H1 (cell line): ENCODE measurements at regions of chr19 and their contacts with region 1.

Region 1: DNA sequence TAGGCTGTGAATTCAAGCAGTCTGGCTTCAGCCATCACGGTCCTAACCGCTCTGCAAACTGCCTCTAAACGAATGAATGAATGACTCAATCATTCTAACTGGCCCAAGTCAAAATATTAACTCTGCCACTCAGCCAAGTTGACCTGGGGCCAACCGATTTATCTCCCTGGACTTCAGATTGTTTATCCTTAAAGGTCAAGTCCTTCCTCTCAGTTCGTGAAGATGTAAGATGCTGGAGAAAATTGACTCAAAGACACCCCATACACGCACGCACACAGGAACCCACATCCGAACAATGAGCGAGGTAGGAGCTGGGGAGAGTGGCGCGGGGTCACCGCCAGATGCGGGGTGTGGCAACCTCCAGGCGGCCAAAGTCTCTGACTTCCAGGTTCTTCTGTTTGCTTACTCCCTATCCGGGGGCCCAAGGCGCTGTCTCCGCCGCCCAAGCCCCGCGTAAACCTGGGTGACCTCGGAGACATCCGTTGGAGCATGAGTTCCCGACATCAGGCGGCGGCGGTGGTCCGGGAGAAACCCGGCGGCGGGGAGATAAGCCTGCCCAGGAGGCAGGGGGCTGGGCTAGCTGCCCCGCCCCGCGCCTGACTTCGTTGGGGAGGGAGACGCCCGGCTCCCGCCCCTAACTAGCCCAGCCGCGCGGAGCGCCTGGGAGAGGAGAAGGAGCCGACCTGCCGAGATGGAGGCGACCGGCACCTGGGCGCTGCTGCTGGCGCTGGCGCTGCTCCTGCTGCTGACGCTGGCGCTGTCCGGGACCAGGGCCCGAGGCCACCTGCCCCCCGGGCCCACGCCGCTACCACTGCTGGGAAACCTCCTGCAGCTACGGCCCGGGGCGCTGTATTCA is at the start of gene CYP2S1:
- DNase-seq: peak in 1 of 2 experiments; percentile 85
- H3K4me3 ChIP-seq: peak within 1 kb of the TSS; percentile 72 to 93 (median 80)
- H3K27ac ChIP-seq: peak within 1 kb of the TSS; percentile 65; the same call in 1 of the 2 replicates
- H3K4me1 ChIP-seq: peaks cover 13 to 26% (median 20%) of the 10 kb centered on the region in 4 experiments
- H3K27me3 ChIP-seq: no peaks in the 10 kb centered on the region
- CTCF ChIP-seq: no peak
- EP300 ChIP-seq: peak in 1 of 2 experiments; percentile 20; a peak in 1 of 3 replicates
- POLR2A ChIP-seq: peak in 1 of 2 experiments; percentile 49; a peak in 1 of 3 replicates
- RAD21 ChIP-seq: no peak
- total RNA-seq, gene CYP2S1: 245 and 267 TPM in 2 replicates

Region 2: DNA sequence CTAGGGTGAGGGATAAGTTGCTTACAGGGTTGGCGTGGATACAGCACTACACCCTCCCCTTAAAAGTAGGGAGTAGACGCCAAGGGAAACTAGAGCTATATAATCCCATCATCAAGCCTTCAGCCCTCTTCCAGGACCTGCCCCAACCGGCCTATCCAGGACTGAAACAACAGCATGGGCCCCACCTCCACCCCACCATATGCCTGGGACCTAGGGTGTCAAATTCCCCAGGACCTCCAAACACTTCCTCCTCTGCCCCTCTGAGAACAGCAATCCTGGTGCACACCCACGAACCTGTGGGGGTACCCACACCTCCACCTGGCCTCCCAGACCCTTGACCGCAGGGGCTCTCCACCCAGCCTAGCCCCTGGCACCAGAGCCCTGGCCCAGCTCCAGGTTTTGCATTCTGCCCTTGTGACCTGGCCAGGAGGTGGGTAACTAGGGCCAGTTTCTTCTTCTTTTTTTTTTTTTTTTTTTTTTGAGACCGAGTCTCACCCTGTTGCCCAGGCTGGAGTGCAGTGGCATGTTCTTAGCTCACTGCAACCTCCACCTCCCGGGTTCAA is 80.0 kb before region 1 on chr19:
- CTCF ChIA-PET with region 1: no interaction called
- POLR2A ChIA-PET with region 1: no interaction called
- DNase-seq: no peak
- H3K4me3 ChIP-seq: no peak overlapping the region
- H3K27ac ChIP-seq: no peak overlapping the region
- H3K4me1 ChIP-seq: no peaks in the 10 kb centered on the region
- H3K27me3 ChIP-seq: no peaks in the 10 kb centered on the region
- CTCF ChIP-seq: no peak
- EP300 ChIP-seq: no peak
- POLR2A ChIP-seq: no peak
- RAD21 ChIP-seq: no peak

Region 3: DNA sequence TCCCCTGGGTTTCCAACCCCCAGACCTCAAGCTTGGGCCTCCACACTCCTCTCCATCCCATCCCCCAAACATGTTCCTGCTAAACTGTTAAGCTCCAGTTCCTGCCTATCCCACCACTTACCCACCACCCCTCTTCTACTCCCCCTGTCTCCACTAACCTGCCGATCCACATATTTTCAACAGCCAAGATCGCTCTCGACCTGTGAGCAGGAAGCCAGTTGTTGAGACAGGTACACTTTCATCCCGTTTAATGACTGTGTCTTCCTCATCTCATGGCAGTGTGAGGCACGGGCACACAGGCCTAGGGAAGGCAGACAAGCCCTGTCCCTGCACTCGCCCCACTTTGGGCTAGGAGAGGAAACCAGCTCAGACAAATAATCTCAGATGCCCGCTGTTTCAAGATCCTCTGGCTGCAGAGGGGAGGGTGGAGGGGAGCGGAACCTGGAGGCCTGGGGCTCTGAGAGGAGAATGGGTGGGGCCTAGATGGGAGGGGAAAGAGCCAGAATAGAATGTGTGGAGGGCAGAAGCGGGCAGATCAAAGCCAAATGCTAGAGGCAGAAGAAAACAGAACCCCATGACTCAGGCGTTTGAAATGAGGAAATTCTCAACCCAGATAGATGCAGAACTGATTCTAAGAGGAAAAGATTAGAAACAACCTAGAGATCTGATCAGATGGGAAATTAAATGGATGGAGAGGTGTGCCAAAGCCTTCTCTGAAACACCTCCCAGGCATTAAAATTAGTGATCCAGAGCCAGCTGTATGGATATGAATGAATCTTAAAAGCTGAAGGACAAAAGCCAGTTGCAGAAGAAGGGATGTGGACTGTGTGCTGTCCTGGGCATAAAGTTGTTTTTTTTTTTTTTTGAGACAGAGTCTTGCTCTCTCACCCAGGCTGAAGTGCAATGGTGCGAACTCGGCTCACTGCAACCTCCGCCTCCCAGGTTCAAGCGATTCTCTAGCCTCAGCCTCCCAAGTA is 16.7 kb before region 1 on chr19:
- CTCF ChIA-PET with region 1: interaction called, 9 read pairs
- POLR2A ChIA-PET with region 1: interaction called, 15 read pairs
- DNase-seq: peak; percentile 75 to 78
- H3K4me3 ChIP-seq: peak overlapping the region; percentile 22 to 52 (median 34)
- H3K27ac ChIP-seq: peak overlapping the region; percentile 68
- H3K4me1 ChIP-seq: peaks cover 0 to 14% (median 5%) of the 10 kb centered on the region in 4 experiments; a peak in 6 of 7 replicates
- H3K27me3 ChIP-seq: no peaks in the 10 kb centered on the region
- CTCF ChIP-seq: no peak
- EP300 ChIP-seq: no peak; a peak in 1 of 3 replicates
- POLR2A ChIP-seq: no peak
- RAD21 ChIP-seq: no peak

Region 4: GRCh38 chr19:41206926-41207750 is 14.3 kb after region 1 on chr19:
- CTCF ChIA-PET with region 1: interaction called, 24 read pairs
- POLR2A ChIA-PET with region 1: interaction called, 24 read pairs
- DNase-seq: no peak
- H3K4me3 ChIP-seq: no peak overlapping the region
- H3K27ac ChIP-seq: no peak overlapping the region
- H3K4me1 ChIP-seq: no peaks in the 10 kb centered on the region
- H3K27me3 ChIP-seq: no peaks in the 10 kb centered on the region
- CTCF ChIP-seq: no peak
- EP300 ChIP-seq: no peak
- POLR2A ChIP-seq: no peak
- RAD21 ChIP-seq: no peak

Region 5: DNA sequence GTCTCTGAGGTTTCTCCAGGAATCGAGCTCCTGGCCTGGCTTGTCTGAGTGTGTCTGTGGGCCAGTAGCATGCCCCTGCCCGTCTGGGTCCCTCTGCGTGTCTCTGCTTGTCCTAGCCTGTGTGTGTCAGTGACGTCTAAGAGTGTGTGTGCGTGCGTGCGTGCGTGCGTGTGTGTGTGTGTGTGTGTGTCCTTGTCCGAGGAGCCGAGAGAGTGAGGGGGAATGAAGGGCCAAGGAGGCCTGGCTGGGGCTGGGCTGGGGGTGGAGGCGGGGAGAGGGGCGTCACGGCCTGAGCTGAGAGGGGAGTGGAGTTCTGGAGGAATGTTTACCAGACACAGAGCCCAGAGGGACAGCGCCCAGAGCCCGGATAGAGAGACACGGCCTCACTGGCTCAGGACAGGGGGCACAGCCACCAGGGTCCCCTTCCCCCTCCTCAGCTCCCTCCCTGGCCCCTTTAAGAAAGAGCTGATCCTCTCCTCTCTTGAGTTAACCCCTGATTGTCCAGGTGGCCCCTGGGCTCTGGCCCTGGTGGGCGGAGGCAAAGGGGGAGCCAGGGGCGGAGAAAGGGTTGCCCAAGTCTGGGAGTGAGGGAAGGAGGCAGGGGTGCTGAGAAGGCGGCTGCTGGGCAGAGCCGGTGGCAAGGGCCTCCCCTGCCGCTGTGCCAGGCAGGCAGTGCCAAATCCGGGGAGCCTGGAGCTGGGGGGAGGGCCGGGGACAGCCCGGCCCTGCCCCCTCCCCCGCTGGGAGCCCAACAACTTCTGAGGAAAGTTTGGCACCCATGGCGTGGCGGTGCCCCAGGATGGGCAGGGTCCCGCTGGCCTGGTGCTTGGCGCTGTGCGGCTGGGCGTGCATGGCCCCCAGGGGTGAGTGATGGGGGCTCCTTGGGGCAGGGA is 26.1 kb after region 1 on chr19 and contains the start of gene AXL:
- CTCF ChIA-PET with region 1: interaction called, 3 read pairs
- POLR2A ChIA-PET with region 1: interaction called, 16 read pairs
- DNase-seq: peak; percentile 78 to 90
- H3K4me3 ChIP-seq: peak within 1 kb of the TSS; percentile 32 to 89 (median 61)
- H3K27ac ChIP-seq: peak within 1 kb of the TSS; percentile 56; the same call in 1 of the 2 replicates
- H3K4me1 ChIP-seq: peaks cover 0 to 17% (median 13%) of the 10 kb centered on the region in 4 experiments; a peak in 6 of 7 replicates
- H3K27me3 ChIP-seq: no peaks in the 10 kb centered on the region
- CTCF ChIP-seq: no peak
- EP300 ChIP-seq: peak in 1 of 2 experiments; percentile 63; a peak in 1 of 3 replicates
- POLR2A ChIP-seq: peak in 1 of 2 experiments; percentile 25; a peak in 1 of 3 replicates
- RAD21 ChIP-seq: 0 out of 4 replicates have a peak, but pooled peaks have one; percentile 0 to 14
- total RNA-seq, gene AXL: 51.0 and 53.3 TPM in 2 replicates